HEK293 (cell line): ENCODE measurements at regions of chr19 and their contacts with region 1.

Region 1: DNA sequence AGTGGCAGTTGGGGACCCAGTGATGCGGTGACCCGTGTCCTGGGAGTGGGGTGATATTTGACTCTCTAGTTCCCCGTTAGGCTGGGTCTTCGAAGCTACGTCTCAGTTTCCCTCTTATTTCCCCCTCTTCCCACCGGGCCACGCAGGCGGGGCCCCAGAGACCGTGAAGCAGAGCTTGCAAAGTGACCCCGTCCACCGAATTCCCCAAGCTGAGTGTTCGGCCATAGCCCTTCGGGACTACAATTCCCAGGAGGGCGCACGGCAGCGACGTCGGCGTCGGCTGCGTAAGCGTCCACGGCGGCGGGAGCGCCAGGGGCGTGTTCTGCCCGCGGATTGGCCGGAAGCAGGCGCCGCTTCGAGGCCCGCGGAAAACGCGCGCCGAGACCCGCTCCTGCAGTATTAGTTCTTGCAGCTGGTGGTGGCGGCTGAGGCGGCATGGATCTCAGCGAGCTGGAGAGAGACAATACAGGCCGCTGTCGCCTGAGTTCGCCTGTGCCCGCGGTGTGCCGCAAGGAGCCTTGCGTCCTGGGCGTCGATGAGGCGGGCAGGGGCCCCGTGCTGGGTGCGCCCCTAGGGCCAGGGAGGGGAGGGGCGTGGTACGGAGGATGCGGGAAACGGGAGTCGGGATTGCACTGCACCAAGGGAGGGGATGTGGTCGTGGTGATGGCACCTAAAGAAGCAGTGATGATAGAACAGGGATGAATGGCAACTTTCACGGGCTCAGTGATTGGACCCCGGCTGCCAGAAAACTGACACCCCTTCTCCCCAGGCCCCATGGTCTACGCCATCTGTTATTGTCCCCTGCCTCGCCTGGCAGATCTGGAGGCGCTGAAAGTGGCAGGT is at the start of gene RNASEH2A:
- H3K4me3 ChIP-seq: peak within 1 kb of the TSS; percentile 68
- H3K27ac ChIP-seq: peak within 1 kb of the TSS; percentile 75
- H3K4me1 ChIP-seq: no peaks in the 10 kb centered on the region; the same call in 1 of the 2 replicates
- CTCF ChIP-seq: peak; percentile 86

Region 2: GRCh38 chr19:12789904-12790619 is 16.4 kb before region 1 on chr19:
- CTCF ChIA-PET with region 1: no interaction called
- POLR2A ChIA-PET with region 1: interaction called, 18 read pairs
- H3K4me3 ChIP-seq: peak overlapping the region; percentile 30
- H3K27ac ChIP-seq: no peak overlapping the region; the same call in 1 of the 2 replicates
- H3K4me1 ChIP-seq: peaks cover 21% of the 10 kb centered on the region
- CTCF ChIP-seq: no peak; the same call in 1 of the 2 replicates